ENCODE measurements at regions of chr10 and their contacts with region 1.

Region 1: DNA sequence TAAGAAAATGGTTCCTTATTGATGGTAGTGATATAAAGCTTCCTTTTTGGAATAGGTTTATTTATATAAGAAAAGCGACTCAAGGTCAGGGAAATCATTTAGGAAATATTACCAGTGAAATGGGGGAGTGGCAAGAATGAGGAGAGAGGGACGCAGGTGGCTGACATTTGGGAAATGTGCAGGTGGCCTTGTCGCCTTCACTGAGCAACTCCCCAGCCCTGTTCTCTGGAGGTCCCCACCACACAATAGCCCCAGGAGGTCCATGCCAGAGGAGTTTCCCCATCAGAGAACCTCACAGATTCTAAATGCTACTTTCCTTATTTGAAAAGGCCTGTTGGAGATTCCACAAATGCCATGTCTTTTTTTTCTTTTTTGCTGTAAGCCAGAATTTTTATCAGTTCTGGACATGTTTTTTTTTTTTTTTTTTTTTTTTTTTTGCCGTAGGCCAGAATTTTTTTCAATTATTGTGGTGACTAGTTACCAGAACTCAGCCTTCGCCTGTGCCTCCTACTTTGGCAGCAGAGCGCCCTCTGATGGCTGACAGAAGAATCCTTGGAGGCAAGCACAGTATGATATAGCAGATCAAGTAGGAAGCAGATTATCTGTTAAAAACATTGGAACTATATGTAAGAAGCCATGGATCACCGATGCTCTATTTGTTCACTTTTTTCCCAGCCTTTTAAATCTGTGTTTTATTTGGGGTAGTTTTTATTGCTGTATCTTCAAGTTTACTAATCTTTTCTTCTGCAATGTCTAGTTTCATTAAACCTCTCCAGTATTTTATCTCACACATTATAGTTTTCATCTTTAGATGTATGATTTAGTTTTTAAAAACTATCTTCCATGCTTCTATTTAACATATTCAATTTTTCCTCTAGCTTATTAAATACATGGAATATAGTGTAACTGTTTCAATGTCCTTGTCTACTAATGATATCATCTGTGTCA is 18.6 kb downstream of the OPALIN start:
- DNase-seq: peak; percentile 83
- H3K4me3 Mint-ChIP-seq: no peak overlapping the region
- H3K27ac Mint-ChIP-seq: no peak overlapping the region
- H3K4me1 Mint-ChIP-seq: peaks cover 6% of the 10 kb centered on the region
- H3K27me3 Mint-ChIP-seq: no peaks in the 10 kb centered on the region

Region 2: DNA sequence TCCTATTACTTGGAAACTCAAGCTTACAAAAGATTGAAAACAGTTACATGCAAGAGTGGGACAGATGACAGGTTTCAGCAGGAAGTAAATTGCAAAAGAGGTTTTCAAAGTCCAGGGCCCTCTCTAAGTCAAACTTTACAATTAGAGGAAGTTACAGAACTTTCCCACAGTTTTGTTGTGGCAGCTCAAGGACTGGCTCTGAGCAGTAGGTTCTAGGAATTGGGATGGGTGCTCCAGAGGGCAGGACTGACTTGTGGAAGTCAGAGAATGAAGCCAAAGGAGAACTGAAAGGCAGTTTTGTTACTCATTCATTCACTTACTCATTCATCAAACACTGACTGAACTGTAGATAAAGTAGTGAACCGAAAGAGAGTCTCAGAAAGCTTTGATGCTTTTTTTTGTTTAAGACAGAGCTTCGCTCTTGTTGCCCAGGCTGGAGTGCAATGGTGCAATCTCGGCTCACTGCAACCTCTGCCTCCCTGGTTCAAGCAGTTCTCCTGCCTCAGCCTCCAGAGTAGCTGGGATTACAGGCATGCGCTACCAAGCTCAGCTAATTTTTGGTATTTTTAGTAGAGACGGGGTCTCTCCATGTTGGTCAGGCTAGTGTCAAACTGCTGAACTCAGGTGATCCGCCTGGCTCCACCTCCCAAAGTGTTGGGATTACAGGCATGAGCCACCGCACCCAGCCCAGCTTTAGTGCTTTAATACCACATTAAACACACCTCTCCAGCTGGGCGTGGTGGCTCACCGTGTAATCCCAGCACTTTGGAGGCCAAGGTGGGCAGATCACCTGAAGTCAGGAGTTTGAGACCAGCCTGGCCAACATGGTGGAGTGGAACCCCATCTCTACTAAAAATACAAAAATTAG is 363.6 kb before region 1 on chr10:
- CTCF ChIA-PET with region 1: no interaction called
- intact Hi-C with region 1: no loop called
- DNase-seq: no peak
- H3K4me3 Mint-ChIP-seq: no peak overlapping the region
- H3K27ac Mint-ChIP-seq: no peak overlapping the region
- H3K4me1 Mint-ChIP-seq: no peaks in the 10 kb centered on the region
- H3K27me3 Mint-ChIP-seq: no peaks in the 10 kb centered on the region

Region 3: DNA sequence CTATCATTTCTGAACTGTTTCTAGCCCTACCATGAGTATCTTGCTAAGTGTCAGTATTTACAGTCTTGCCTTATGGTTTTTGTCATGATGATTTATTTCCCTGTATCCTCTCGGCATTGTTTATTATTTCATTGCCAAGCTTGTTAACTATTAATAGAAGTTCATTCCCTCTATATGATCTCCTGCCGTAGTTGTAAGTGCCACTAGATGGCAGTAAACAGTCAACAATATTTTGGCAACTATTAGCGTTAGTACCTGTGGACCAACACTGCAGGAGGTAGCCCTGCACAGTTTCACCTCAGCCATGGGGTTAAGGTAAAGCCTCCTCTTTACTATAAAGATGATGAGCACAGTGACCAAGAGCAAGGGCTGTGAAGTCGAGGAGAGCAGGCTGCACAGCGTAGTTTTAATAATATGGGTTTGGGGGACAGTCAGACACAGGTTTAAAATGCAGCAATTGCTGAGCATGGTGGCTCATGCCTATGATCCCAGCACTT is 323.0 kb before region 1 on chr10:
- CTCF ChIA-PET with region 1: interaction called, 10 read pairs
- intact Hi-C with region 1: loop called (anchors 1 kb)
- DNase-seq: peak; percentile 53
- H3K4me3 Mint-ChIP-seq: no peak overlapping the region
- H3K27ac Mint-ChIP-seq: no peak overlapping the region
- H3K4me1 Mint-ChIP-seq: no peaks in the 10 kb centered on the region
- H3K27me3 Mint-ChIP-seq: no peaks in the 10 kb centered on the region

Region 4: GRCh38 chr10:96292971-96293920 is 47.0 kb before region 1 on chr10:
- CTCF ChIA-PET with region 1: interaction called, 6 read pairs
- intact Hi-C with region 1: loop called (anchors 1 kb)
- DNase-seq: peak; percentile 31
- H3K4me3 Mint-ChIP-seq: no peak overlapping the region
- H3K27ac Mint-ChIP-seq: no peak overlapping the region
- H3K4me1 Mint-ChIP-seq: peaks cover 17% of the 10 kb centered on the region
- H3K27me3 Mint-ChIP-seq: no peaks in the 10 kb centered on the region

Region 5: DNA sequence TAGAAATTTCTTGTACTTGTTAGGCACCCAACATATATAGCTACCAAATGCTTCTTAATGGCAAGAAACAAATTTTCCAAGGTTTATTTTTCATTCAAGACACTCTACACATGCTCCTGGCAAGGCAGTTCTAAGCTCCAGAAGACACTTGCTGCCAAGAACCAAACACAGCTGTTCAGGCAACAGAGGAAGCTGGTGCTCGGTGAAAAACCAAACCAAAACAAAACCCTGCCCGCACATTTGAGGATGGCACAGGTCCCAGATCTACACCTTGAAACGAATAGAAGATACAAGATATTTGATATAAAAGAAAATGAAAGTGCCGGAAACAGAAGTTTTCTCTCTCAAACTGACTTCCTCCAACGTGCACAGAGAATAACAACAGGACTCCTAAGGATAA is 40.8 kb before region 1 on chr10:
- CTCF ChIA-PET with region 1: interaction called, 6 read pairs
- intact Hi-C with region 1: loop called (anchors 2 kb)
- DNase-seq: peak; percentile 47
- H3K4me3 Mint-ChIP-seq: peak overlapping the region; percentile 48
- H3K27ac Mint-ChIP-seq: peak overlapping the region; percentile 73
- H3K4me1 Mint-ChIP-seq: peaks cover 43% of the 10 kb centered on the region
- H3K27me3 Mint-ChIP-seq: peaks cover 3% of the 10 kb centered on the region

Measured in activated naive CD4-positive, alpha-beta T cell treated with anti-CD3 and anti-CD28 coated beads for 36 hours (primary cell).